A673 (cell line): ENCODE measurements at regions of chr10 and their contacts with region 1.

Region 1: GRCh38 chr10:30467651-30468338 is 33.8 kb downstream of the MAP3K8 start:
- DNase-seq: no peak
- H3K4me3 ChIP-seq: no peak overlapping the region
- H3K27ac ChIP-seq: no peak overlapping the region
- H3K4me1 ChIP-seq: no peaks in the 10 kb centered on the region
- H3K27me3 ChIP-seq: no peaks in the 10 kb centered on the region
- CTCF ChIP-seq: no peak

Region 2: DNA sequence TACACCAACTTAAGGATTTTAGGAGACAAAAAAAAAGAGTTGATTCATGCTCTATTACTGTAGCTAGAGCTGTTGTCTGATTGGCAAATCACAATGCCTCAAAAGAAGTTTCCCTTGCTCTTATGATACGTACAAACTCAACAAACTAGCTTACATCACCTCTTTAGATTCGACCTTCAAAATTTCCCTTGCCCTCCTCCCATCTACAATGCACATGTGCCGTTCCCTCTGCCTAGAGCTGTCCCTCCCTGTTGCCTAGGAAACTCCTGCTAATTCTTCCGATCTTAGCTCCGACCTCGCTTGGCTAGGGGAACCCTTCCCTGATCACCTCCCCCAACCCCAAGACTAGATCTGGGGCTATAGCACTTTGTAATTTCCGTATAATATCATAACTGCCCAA is 21.6 kb after region 1 on chr10:
- CTCF ChIA-PET with region 1: interaction called, 10 read pairs
- POLR2A ChIA-PET with region 1: no interaction called
- intact Hi-C with region 1: no loop called
- DNase-seq: no peak
- H3K4me3 ChIP-seq: no peak overlapping the region
- H3K27ac ChIP-seq: no peak overlapping the region
- H3K4me1 ChIP-seq: no peaks in the 10 kb centered on the region
- H3K27me3 ChIP-seq: no peaks in the 10 kb centered on the region
- CTCF ChIP-seq: no peak

Region 3: DNA sequence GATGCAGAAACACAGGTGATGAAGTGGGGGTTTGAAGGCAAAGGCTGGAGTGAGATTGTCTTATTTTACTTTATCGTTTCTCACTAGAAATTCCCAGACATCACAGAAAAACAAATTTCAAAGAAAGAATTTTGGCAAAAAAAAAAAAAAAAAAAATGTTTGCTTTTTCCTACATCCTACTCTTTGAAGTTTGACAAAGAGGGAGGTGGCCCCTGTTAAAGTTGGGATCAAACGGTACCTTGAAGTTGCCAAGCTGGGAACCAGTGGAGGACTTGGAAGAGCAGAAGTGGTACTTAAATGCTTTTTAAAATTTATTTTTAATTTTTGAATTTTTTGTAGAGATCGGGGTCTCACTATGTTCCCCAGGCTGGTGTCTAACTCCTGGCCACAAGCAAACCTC is 1652.4 kb after region 1 on chr10:
- CTCF ChIA-PET with region 1: no interaction called
- POLR2A ChIA-PET with region 1: interaction called, 12 read pairs
- intact Hi-C with region 1: no loop called
- DNase-seq: no peak
- H3K4me3 ChIP-seq: no peak overlapping the region
- H3K27ac ChIP-seq: no peak overlapping the region
- H3K4me1 ChIP-seq: no peaks in the 10 kb centered on the region
- H3K27me3 ChIP-seq: no peaks in the 10 kb centered on the region
- CTCF ChIP-seq: no peak